ENCODE measurements at regions of chr6 and their contacts with region 1.

Region 1: DNA sequence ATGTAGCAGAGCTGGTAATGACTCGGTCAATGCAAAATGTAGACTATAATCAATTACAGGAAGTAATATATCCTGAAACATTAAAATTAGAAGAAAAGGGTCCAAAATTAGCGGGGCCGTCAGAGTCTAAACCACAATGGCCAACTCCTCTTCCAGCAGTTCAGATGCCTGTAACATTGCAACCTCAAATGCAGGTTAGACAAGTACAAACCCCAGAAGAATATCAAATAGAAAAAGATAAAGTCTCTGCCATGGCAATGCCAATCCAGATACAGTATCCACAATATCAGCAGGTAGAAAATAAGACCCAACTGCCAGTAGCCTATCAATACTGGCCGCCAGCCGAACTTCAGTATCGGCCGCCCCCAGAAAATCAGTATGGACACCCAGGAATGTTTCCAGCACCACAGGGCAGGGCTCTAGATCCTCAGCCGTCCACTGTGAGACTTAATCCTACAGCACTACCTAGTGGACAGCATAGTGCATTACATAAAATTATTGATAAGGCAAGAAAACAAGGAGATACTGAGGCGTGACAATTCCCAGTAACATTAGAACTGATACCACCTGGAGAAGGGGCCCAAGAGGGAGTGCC is 158.4 kb downstream of the GPX5 start:
- DNase-seq: peak in 4 of 5 donors; percentile 35 to 52 (median 44)
- H3K4me3 ChIP-seq: no peak overlapping the region
- H3K4me3 Mint-ChIP-seq: peak overlapping the region in 5 of 8 donors; percentile 14 to 76 (median 66)
- H3K27ac ChIP-seq: no peak overlapping the region
- H3K27ac Mint-ChIP-seq: peak overlapping the region in 1 of 7 donors; percentile 38
- H3K4me1 ChIP-seq: peaks cover 15% of the 10 kb centered on the region
- H3K4me1 Mint-ChIP-seq: peaks cover 9 to 21% (median 17%) of the 10 kb centered on the region in 4 donors
- H3K27me3 ChIP-seq: peaks cover 16% of the 10 kb centered on the region
- H3K27me3 Mint-ChIP-seq: peaks cover 38 to 49% of the 10 kb centered on the region in 2 donors

Region 2: GRCh38 chr6:28496099-28496779 is 187.8 kb before region 1 on chr6:
- CTCF ChIA-PET with region 1: no interaction called
- POLR2A ChIA-PET with region 1: no interaction called
- intact Hi-C with region 1: loop called (anchors 1 kb)
- DNase-seq: peak in 2 of 5 donors; percentile 11 to 14
- H3K4me3 ChIP-seq: no peak overlapping the region
- H3K4me3 Mint-ChIP-seq: no peak overlapping the region
- H3K27ac ChIP-seq: no peak overlapping the region
- H3K27ac Mint-ChIP-seq: no peak overlapping the region
- H3K4me1 ChIP-seq: no peaks in the 10 kb centered on the region
- H3K4me1 Mint-ChIP-seq: no peaks in the 10 kb centered on the region
- H3K27me3 ChIP-seq: no peaks in the 10 kb centered on the region
- H3K27me3 Mint-ChIP-seq: peaks cover 14 to 26% of the 10 kb centered on the region in 2 donors

Region 3: GRCh38 chr6:28729501-28730402 is 45.7 kb after region 1 on chr6:
- CTCF ChIA-PET with region 1: no interaction called
- POLR2A ChIA-PET with region 1: no interaction called
- intact Hi-C with region 1: no loop called
- DNase-seq: no peak
- H3K4me3 ChIP-seq: no peak overlapping the region
- H3K4me3 Mint-ChIP-seq: peak overlapping the region; percentile 71 to 86 (median 77)
- H3K27ac ChIP-seq: no peak overlapping the region
- H3K27ac Mint-ChIP-seq: peak overlapping the region in 2 of 7 donors; percentile 46 to 82
- H3K4me1 ChIP-seq: peaks cover 10% of the 10 kb centered on the region
- H3K4me1 Mint-ChIP-seq: peaks cover 9 to 22% (median 15%) of the 10 kb centered on the region in 4 donors
- H3K27me3 ChIP-seq: peaks cover 23% of the 10 kb centered on the region
- H3K27me3 Mint-ChIP-seq: peaks cover 62 to 78% of the 10 kb centered on the region in 2 donors

Region 4: DNA sequence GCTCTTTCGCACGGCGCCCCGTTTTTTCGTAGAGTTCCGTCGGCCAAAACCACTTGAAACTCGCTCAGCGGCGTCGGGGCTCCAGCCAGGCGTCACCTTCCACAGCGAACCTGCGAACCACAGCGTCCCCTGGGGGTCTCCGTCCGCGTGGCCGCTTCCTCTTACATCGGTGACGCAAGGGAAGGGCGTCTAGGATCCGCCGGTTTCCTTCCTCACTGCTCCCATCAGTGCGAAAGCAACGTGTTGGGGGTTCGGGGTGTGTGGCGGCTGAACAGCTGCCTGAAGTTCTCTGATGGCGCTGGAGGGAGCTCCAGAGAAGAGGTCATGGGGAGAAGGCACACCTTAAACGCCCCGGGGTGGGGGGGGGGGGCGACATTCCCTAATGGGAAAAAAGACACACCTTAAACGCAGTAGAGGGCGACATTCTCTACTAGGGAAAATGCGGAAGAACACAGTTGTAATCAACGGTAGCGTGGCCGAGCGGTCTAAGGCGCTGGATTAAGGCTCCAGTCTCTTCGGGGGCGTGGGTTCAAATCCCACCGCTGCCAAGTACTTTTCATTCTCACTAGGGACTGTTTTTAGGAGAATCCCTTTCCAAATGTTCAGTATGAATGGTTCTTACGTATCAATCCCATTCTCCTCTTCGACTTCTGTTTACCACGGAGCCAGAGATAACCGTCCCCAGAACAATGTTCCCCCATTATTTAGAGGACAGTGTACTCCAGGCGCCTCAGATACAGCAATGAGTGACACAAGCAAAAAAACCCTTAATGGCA is 304.7 kb after region 1 on chr6:
- CTCF ChIA-PET with region 1: no interaction called
- POLR2A ChIA-PET with region 1: no interaction called
- intact Hi-C with region 1: loop called (anchors 1 kb)
- DNase-seq: peak; percentile 69 to 77 (median 70)
- H3K4me3 ChIP-seq: peak overlapping the region; percentile 17 to 34
- H3K4me3 Mint-ChIP-seq: peak overlapping the region; percentile 76 to 89 (median 83)
- H3K27ac ChIP-seq: no peak overlapping the region
- H3K27ac Mint-ChIP-seq: peak overlapping the region in 5 of 7 donors; percentile 41 to 84 (median 72)
- H3K4me1 ChIP-seq: peaks cover 11% of the 10 kb centered on the region
- H3K4me1 Mint-ChIP-seq: peaks cover 18 to 40% (median 24%) of the 10 kb centered on the region in 4 donors
- H3K27me3 ChIP-seq: no peaks in the 10 kb centered on the region
- H3K27me3 Mint-ChIP-seq: peaks cover 10 to 16% of the 10 kb centered on the region in 2 donors

Measured in CD4-positive, alpha-beta memory T cell (primary cell).